B cell (primary cell): ENCODE measurements at regions of chr6 and their contacts with region 1.

Region 1: GRCh38 chr6:273551-274058 is 18.7 kb upstream of the DUSP22 start:
- DNase-seq: no peak
- ATAC-seq: no peak
- H3K4me3 ChIP-seq: no peak overlapping the region
- H3K4me3 Mint-ChIP-seq: no peak overlapping the region
- H3K27ac ChIP-seq: no peak overlapping the region
- H3K27ac Mint-ChIP-seq: no peak overlapping the region
- H3K4me1 ChIP-seq: peaks cover 30 to 45% of the 10 kb centered on the region in 2 donors
- H3K4me1 Mint-ChIP-seq: peaks cover 32% of the 10 kb centered on the region
- H3K27me3 ChIP-seq: no peaks in the 10 kb centered on the region
- H3K27me3 Mint-ChIP-seq: no peaks in the 10 kb centered on the region
- CTCF ChIP-seq: no peak

Region 2: DNA sequence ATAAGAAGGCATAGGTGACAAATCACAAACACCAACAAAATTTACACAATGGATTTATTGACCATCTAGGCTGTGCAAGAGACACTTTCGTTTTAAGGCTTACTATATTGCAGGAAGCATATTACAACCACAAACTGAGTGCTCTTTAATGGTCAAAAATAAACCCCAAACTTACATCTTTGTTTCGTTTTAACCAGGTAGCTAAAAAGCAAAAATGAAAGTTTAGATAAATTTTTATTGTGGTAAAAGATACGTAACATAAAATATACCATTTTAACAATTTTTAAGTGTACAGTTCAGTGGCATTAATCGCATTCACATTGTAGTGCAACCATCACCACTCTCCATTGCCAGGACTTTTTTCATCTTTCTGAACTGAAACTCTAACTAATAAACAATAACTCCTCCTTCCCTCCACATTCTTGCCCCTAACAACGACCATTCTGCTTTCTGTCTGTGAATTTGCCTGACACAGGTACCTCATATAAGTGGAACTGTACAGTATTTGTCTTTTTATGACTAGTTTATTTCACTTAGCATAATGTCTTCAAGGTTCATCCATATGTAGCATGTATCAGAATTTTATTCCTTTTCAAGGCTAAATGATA is 13.6 kb before region 1 on chr6:
- CTCF ChIA-PET with region 1: no interaction called
- POLR2A ChIA-PET with region 1: interaction called, 6 read pairs
- intact Hi-C with region 1: loop called (anchors 2 kb)
- DNase-seq: peak; percentile 39
- ATAC-seq: peak; percentile 31
- H3K4me3 ChIP-seq: peak overlapping the region in 4 of 5 experiments; percentile 13 to 40 (median 30)
- H3K4me3 Mint-ChIP-seq: peak overlapping the region; percentile 59
- H3K27ac ChIP-seq: peak overlapping the region; percentile 21 to 74
- H3K27ac Mint-ChIP-seq: peak overlapping the region; percentile 16
- H3K4me1 ChIP-seq: peaks cover 57 to 58% of the 10 kb centered on the region in 2 donors
- H3K4me1 Mint-ChIP-seq: peaks cover 69% of the 10 kb centered on the region
- H3K27me3 ChIP-seq: no peaks in the 10 kb centered on the region
- H3K27me3 Mint-ChIP-seq: no peaks in the 10 kb centered on the region
- CTCF ChIP-seq: no peak